ENCODE measurements at regions of chr20 and their contacts with region 1.

Region 1: GRCh38 chr20:740141-740540 is 28.2 kb downstream of the SLC52A3 start:
- DNase-seq: no peak
- H3K27ac ChIP-seq: no peak overlapping the region
- CTCF ChIP-seq: no peak

Region 2: GRCh38 chr20:561437-562231 is 178.5 kb before region 1 on chr20:
- CTCF ChIA-PET with region 1: interaction called, 16 read pairs
- POLR2A ChIA-PET with region 1: no interaction called
- DNase-seq: peak; percentile 74
- H3K27ac ChIP-seq: no peak overlapping the region
- CTCF ChIP-seq: peak; percentile 98

Region 3: DNA sequence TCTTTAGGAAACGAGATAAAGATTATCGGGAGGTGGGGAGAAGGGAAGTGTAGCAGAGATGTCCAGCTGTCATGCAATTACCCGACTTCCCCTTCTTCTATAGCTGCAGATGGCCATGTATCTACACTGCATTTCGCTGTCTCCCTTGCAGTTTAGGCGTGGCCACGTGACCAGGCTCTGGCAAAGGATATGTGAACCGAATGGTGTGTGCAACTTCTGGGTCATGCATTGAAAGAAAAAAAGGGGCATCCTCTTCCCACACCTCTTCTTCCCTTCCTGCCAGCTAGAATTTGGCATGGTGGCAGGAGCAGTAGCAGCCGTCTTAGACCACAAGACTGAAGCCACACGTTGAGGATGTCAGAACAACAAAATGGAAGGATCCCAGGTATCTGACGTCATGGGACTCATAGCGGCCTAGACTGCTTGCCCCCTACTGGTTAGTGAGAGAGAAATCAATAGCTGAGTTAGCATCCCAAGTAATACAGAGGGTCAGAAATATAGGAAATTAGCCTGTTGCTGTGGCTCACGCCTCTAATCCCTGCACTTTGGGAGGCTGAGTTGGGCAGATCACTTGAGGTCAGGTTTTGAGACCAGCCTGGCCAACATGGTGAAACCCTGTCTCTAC is 162.9 kb before region 1 on chr20:
- CTCF ChIA-PET with region 1: no interaction called
- POLR2A ChIA-PET with region 1: no interaction called
- DNase-seq: no peak
- H3K27ac ChIP-seq: no peak overlapping the region
- CTCF ChIP-seq: no peak

Region 4: GRCh38 chr20:645318-646106 is 94.6 kb before region 1 on chr20:
- CTCF ChIA-PET with region 1: interaction called, 10 read pairs
- POLR2A ChIA-PET with region 1: no interaction called
- DNase-seq: peak; percentile 75
- H3K27ac ChIP-seq: peak overlapping the region; percentile 17
- CTCF ChIP-seq: peak; percentile 96

Region 5: GRCh38 chr20:768426-768978 is 28.4 kb after region 1 on chr20 and contains the start of gene SLC52A3:
- CTCF ChIA-PET with region 1: interaction called, 12 read pairs
- POLR2A ChIA-PET with region 1: no interaction called
- DNase-seq: peak; percentile 71
- H3K27ac ChIP-seq: no peak within 1 kb of the TSS
- CTCF ChIP-seq: 0 out of 2 replicates have a peak, but pooled peaks have one; percentile 6

Region 6: DNA sequence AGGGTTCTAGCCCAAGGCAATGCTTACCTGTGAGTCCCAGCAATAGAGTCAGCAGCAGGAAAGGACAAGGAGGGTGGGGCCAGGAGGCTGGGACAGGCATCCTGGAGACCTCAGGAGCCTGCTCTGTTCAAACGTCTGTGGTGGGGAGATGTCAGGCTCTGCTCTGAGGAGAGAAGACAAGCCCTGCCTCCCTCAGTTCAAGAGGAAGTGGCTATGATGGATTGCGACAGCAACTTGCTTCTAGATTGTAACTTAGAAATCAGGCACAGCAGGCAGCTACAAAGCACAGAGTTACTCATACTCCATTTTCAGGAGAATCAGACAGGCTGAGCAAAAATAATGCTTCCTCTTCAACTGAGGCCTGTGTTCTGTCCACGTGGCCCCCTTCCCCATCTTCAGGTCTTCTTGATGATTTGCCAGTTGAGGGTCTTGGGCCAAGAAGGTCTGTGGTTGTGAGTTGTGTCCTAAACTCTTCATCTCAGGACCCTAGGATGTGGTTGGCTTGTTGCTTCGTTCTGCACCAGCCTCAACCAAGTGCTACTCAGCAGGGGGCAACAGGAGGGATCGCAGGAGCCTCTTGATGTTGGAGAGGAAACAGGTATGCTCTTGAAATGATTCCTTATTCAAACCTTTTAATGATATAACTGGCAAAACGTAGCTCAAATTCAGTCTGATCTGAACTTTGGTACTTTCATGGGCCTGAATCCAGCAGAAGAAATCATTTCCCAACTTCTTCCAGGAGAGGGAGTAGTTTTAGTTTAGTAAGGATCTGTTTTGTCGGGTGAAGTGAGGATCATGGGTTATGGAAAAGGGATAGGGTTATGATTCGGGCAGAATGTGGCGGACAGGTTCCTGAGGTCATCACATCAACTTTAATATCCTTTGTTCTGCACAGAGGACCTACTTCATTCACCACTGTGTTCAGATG is 848.7 kb after region 1 on chr20:
- CTCF ChIA-PET with region 1: no interaction called
- POLR2A ChIA-PET with region 1: no interaction called
- DNase-seq: no peak
- H3K27ac ChIP-seq: no peak overlapping the region
- CTCF ChIP-seq: no peak

Measured in RWPE1 (cell line).